Heart left ventricle (tissue), 16 donors: ENCODE measurements at regions of chr19 and their contacts with region 1.

Region 1: GRCh38 chr19:16309643-16310042 is 15.0 kb upstream of the KLF2 start:
- DNase-seq: no peak
- ATAC-seq: no peak
- H3K4me3 ChIP-seq: no peak overlapping the region
- H3K27ac ChIP-seq: no peak overlapping the region
- H3K4me1 ChIP-seq: peaks cover 0 to 19% (median 2%) of the 10 kb centered on the region in 12 donors
- H3K27me3 ChIP-seq: no peaks in the 10 kb centered on the region
- CTCF ChIP-seq: no peak
- POLR2A ChIP-seq: no peak

Region 2: GRCh38 chr19:16168465-16169081 is 141.1 kb before region 1 on chr19:
- intact Hi-C with region 1: no loop called
- DNase-seq: no peak
- ATAC-seq: no peak
- H3K4me3 ChIP-seq: no peak overlapping the region
- H3K27ac ChIP-seq: no peak overlapping the region
- H3K4me1 ChIP-seq: no peaks in the 10 kb centered on the region
- H3K27me3 ChIP-seq: peaks cover 0 to 4% (median 0%) of the 10 kb centered on the region in 9 donors
- CTCF ChIP-seq: no peak
- POLR2A ChIP-seq: no peak

Region 3: DNA sequence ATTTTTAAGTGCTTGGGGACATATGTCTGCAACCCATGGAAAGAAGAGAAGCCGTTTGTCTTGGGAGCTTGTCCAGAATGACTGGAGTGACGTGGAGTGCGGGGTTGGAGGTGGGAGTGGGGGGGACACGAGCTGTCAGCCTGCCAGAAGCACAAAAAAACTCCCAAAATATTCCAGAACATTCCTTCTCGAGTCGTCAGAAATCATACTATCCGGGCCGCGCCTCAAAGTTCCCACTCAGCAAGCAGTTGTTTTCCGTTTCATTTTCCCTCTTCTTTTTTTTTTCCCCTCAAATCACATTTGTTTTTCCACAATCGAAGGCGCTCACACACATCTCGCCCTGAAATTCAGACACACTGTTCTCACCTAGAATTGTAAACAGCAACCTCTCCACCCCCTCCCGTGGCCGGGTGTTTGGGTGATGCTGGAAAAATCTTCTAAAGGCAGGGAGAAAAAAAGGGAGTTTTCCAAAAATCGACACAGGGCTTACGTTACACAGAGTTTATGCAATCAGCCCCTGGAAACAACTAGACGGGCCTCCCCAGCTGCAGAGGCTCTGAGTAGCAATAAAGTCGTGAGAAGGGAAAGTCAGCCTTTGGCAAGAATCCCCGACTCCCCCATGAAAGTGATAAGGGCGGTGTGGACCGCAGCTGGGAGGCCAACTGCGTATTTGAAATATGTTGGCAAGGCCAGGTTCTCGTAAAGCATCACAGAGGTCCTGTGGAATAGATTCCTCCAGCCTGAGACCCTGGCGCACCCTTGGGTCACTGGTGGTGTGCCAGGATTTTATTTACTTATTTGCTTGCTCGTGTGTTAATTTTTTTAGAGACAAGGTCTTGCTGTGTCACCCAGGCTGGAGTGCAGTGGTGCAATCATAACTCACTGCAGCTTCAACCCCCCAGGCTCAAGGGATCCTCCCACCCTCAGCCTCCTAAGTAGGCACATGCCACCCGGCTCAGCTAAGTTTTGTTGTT is 16.2 kb before region 1 on chr19:
- intact Hi-C with region 1: loop called in 2 of 10 experiments (anchors 1 to 2 kb)
- DNase-seq: peak in 4 of 5 donors; percentile 78 to 85 (median 84)
- ATAC-seq: peak; percentile 79 to 91 (median 86)
- H3K4me3 ChIP-seq: peak overlapping the region in 10 of 12 donors; percentile 4 to 47 (median 27)
- H3K27ac ChIP-seq: peak overlapping the region; percentile 79 to 97 (median 87)
- H3K4me1 ChIP-seq: peaks cover 0 to 45% (median 23%) of the 10 kb centered on the region in 12 donors
- H3K27me3 ChIP-seq: no peaks in the 10 kb centered on the region
- CTCF ChIP-seq: no peak
- POLR2A ChIP-seq: no peak